Activated CD4-positive, alpha-beta memory T cell treated with anti-CD3 and anti-CD28 coated beads, Interleukin-2, amount 10 ng/mL, durations not matched to agents 7 days and 5 days (primary cell): ENCODE measurements at regions of chr4 and their contacts with region 1.

Region 1: DNA sequence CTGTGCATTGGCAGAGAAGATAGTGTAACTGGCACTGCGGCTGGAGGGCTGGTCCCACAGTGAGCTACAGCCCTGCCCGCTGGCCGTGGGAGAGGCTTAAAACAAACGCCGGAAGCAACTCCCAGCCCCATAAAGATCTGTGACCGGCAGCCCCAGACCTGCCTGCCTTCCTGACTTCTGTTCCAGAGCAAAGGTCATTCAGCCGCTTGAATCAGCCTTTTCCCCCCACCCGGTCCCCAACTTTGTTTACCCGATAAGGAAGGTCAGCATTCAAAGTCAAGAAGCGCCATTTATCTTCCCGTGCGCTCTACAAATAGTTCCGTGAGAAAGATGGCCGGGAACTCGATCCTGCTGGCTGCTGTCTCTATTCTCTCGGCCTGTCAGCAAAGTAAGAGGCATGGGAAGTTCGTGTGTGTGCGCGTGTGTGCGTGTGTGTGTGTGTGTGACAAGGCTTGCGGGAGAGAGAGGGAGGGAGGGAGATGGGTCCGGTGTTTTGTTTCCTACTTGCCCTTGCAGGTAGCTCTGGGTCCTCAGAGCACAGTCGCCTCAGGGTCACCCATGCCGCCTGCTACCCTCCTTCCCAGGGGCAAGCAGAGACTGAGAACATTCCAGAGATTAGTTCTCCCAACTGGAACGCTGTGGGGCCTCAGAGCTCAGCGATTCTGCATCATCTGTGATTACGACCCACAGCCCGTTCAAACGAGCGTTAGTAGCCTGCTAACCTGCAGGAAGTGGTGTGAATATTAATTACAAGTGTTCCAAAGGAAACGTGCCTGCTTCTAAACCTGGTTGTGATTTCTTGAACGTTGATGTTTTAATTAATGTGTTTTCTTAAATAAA is at the start of gene MGST2:
- DNase-seq: peak; percentile 38
- H3K4me3 Mint-ChIP-seq: peak within 1 kb of the TSS; percentile 90
- H3K27ac Mint-ChIP-seq: peak within 1 kb of the TSS; percentile 84
- H3K4me1 Mint-ChIP-seq: peaks cover 32% of the 10 kb centered on the region
- H3K27me3 Mint-ChIP-seq: no peaks in the 10 kb centered on the region
- total RNA-seq, gene MGST2: 24.5 to 27.9 TPM

Region 2: GRCh38 chr4:139651282-139652194 is 14.4 kb before region 1 on chr4:
- CTCF ChIA-PET with region 1: interaction called, 54 read pairs
- POLR2A ChIA-PET with region 1: interaction called, 34 read pairs
- DNase-seq: peak; percentile 77
- H3K4me3 Mint-ChIP-seq: no peak overlapping the region
- H3K27ac Mint-ChIP-seq: no peak overlapping the region
- H3K4me1 Mint-ChIP-seq: peaks cover 9% of the 10 kb centered on the region
- H3K27me3 Mint-ChIP-seq: peaks cover 4% of the 10 kb centered on the region